ENCODE measurements at regions of chr4 and their contacts with region 1.

Region 1: GRCh38 chr4:56977321-56978012 is at the start of gene NOA1:
- DNase-seq: peak; percentile 98
- H3K4me3 ChIP-seq: peak within 1 kb of the TSS; percentile 98
- H3K27ac ChIP-seq: peak within 1 kb of the TSS; percentile 68
- H3K27me3 ChIP-seq: no peaks in the 10 kb centered on the region
- CTCF ChIP-seq: peak; percentile 1; the same call in 1 of the 2 replicates
- polyA plus RNA-seq, gene NOA1: 17.1 and 17.8 TPM in 2 replicates

Region 2: DNA sequence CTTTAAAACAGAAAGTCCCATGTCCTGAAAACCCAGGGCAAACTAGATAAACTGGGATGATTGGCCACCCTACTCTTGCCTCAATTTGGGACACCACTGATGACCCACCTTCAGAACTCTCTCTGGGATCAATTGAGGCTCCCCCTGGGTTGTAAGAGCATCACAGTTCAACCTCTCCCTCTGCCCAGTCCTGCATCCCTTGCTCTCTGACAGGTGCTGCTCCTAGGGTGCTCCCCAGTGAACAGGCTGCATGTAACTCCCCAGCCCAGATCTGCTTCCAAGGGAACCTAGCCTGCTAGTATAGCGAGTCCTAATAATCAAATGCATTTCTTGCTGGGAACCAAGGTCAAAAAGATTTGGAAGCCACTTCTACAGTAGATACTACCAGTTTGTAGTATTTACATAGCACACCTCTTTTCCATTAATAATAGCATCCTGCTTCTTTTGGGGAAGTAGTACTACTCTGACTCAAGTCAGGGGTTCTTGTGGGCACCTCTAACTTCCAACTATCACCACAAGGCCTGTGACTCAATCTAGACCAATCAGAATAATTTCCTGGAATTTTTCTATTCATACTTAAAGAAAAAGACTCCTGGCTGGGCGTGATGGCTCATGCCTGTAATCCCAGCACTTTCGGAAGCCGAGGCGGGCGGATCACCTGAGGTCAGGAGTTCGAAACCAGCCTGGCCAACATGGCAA is 113.9 kb before region 1 on chr4:
- CTCF ChIA-PET with region 1: no interaction called
- POLR2A ChIA-PET with region 1: no interaction called
- DNase-seq: no peak
- H3K4me3 ChIP-seq: no peak overlapping the region
- H3K27ac ChIP-seq: no peak overlapping the region
- H3K27me3 ChIP-seq: no peaks in the 10 kb centered on the region
- CTCF ChIP-seq: no peak

Region 3: DNA sequence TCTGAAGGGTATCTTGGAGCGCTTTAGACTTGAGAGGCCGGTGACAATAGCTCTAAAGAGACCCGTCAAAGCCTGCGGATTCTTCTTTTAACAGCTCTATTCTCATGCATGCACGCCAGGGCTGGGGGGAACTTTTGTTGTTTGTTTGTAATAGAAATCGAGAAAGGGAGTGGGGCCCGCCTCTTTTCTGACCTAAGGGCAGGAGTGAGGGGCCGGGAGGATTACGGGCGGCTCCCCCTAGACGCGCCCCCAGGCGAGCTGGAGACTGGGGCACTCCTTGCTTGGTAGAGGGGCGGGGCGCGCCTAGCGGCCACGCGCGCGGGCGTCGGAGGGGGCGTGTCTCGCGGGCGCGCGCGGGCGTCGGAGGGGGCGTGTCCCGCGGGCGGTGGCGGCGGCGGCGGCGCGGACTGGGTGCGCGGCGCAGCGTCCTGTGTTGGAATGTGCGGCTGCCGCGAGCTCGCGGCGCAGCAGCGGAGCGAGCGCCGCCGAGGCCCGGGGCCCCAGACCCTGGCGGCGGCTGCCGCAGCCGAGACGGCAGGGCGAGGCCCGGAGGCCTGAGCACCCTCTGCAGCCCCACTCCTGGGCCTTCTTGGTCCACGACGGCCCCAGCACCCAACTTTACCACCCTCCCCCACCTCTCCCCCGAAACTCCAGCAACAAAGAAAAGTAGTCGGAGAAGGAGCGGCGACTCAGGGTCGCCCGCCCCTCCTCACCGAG is 69.8 kb before region 1 on chr4 and contains the start of gene REST:
- CTCF ChIA-PET with region 1: no interaction called
- POLR2A ChIA-PET with region 1: interaction called, 13 read pairs
- DNase-seq: no peak
- H3K4me3 ChIP-seq: peak within 1 kb of the TSS; percentile 85
- H3K27ac ChIP-seq: peak within 1 kb of the TSS; percentile 35
- H3K27me3 ChIP-seq: no peaks in the 10 kb centered on the region
- CTCF ChIP-seq: no peak
- polyA plus RNA-seq, gene REST: 23.9 and 30.6 TPM in 2 replicates

Region 4: GRCh38 chr4:56958111-56958517 is 19.4 kb before region 1 on chr4:
- CTCF ChIA-PET with region 1: no interaction called
- POLR2A ChIA-PET with region 1: interaction called, 14 read pairs
- DNase-seq: peak; percentile 96
- H3K4me3 ChIP-seq: 0 out of 2 replicates have a peak overlapping the region, but pooled peaks have one; percentile 3
- H3K27ac ChIP-seq: peak overlapping the region; percentile 75
- H3K27me3 ChIP-seq: no peaks in the 10 kb centered on the region
- CTCF ChIP-seq: no peak

Region 5: GRCh38 chr4:57147335-57148060 is 170.0 kb after region 1 on chr4:
- CTCF ChIA-PET with region 1: no interaction called
- POLR2A ChIA-PET with region 1: no interaction called
- DNase-seq: no peak
- H3K4me3 ChIP-seq: no peak overlapping the region
- H3K27ac ChIP-seq: no peak overlapping the region
- H3K27me3 ChIP-seq: no peaks in the 10 kb centered on the region
- CTCF ChIP-seq: no peak

Measured in AG04450 (cell line).